OCI-LY7 (cell line): ENCODE measurements at regions of chr13 and their contacts with region 1.

Region 1: GRCh38 chr13:99051768-99052455 is 74.0 kb upstream of the DOCK9 start:
- DNase-seq: peak; percentile 9
- H3K4me3 ChIP-seq: peak overlapping the region; percentile 47
- H3K27ac ChIP-seq: peak overlapping the region; percentile 92
- H3K4me1 ChIP-seq: peaks cover 70% of the 10 kb centered on the region
- CTCF ChIP-seq: no peak

Region 2: DNA sequence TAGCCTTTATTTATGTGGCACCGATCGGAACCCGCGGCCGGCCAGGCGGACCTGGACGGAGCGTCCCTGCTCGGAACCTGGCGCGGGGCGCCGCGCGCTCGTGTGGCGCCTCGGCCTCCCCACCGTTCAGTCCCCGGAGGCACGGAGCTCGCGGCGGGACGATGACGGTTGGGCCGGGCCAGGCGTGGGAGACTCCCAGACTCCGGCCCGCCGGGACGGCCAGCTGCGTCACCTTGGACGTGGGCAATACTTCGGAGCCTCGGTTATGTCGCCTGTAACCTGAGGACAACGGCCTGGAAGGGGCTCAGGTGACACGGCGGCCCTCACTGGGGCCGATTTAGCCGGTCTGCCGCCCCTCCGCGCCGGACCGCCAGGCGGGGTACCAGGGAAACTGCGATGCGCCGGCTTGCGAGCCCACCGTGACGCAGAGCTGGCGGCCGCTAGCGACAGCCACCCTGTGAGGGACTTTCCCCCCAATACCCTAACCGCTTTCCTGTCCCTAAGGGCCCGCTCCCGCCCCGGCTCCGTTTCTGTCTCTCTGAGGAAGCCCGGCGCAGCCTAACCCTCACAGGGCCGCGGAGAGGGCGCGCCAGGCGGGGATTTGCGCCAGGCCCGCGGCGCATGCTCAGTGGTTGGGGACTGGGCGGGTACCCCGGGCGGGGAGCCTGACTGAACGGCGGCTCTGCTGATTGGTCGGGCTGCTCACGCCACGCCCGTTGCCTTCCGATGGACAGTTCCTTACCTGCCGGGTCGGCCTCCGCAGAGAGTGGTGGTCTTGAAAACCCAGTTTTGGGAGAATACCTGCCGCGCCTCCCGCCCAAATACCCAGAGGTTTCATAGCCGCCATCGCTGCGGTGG is 35.4 kb after region 1 on chr13:
- CTCF ChIA-PET with region 1: interaction called, 4 read pairs
- POLR2A ChIA-PET with region 1: interaction called, 8 read pairs
- intact Hi-C with region 1: loop called (anchors 2 kb)
- DNase-seq: peak; percentile 88
- H3K4me3 ChIP-seq: peak overlapping the region; percentile 82
- H3K27ac ChIP-seq: peak overlapping the region; percentile 84
- H3K4me1 ChIP-seq: peaks cover 31% of the 10 kb centered on the region
- CTCF ChIP-seq: no peak

Region 3: GRCh38 chr13:99200432-99201167 is 148.7 kb after region 1 on chr13 and contains the start of gene UBAC2:
- CTCF ChIA-PET with region 1: no interaction called
- POLR2A ChIA-PET with region 1: no interaction called
- intact Hi-C with region 1: no loop called
- DNase-seq: peak; percentile 92
- H3K4me3 ChIP-seq: peak within 1 kb of the TSS; percentile 87
- H3K27ac ChIP-seq: peak within 1 kb of the TSS; percentile 82
- H3K4me1 ChIP-seq: peaks cover 50% of the 10 kb centered on the region
- CTCF ChIP-seq: no peak
- total RNA-seq, gene UBAC2: 26.8 and 33.4 TPM in 2 replicates

Region 4: DNA sequence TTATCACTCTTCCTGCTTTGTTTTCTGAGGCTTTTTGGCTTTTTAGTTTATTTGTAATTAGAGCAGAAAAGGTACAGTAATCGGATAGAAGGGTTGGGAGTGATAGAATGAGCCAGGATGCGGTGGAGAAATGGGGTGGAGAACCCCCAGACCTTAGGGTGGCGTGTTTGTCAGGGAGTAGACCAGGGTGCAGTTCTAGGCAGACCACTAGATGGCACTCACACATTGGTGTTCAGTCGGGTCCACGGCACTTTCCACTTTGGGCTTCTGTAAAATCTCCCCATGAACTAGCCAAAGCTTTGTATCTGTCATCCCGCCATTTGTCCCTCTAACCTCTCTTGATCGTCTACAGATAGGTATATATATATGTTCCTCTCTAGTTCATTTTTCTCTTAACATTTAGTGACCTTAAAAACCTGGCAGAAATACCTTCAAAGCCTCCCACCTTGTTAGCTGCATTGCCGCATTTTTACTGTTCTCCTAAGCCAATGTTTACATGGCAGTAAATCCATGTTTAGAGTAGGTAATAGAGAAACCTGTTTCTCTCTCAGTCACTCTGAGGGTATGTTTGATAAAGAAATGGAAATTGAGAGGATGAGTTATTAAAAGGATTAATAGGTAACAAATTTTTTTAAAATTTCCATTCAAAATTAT is 604.3 kb after region 1 on chr13:
- CTCF ChIA-PET with region 1: no interaction called
- POLR2A ChIA-PET with region 1: no interaction called
- intact Hi-C with region 1: no loop called
- DNase-seq: peak; percentile 45
- H3K4me3 ChIP-seq: no peak overlapping the region
- H3K27ac ChIP-seq: no peak overlapping the region
- H3K4me1 ChIP-seq: no peaks in the 10 kb centered on the region
- CTCF ChIP-seq: peak; percentile 82